IMR-90 (cell line): ENCODE measurements at regions of chr20 and their contacts with region 1.

Region 1: GRCh38 chr20:43187476-43188233 is 2.1 kb downstream of the PTPRT start:
- DNase-seq: peak; percentile 44
- ATAC-seq: peak; percentile 85
- H3K4me3 ChIP-seq: no peak overlapping the region
- H3K27ac ChIP-seq: no peak overlapping the region
- H3K4me1 ChIP-seq: no peaks in the 10 kb centered on the region
- H3K27me3 ChIP-seq: peaks cover 18% of the 10 kb centered on the region
- CTCF ChIP-seq: peak; percentile 92
- POLR2A ChIP-seq: no peak
- RAD21 ChIP-seq: peak; percentile 74

Region 2: GRCh38 chr20:41738604-41739206 is 1449.0 kb before region 1 on chr20:
- CTCF ChIA-PET with region 1: no interaction called
- POLR2A ChIA-PET with region 1: no interaction called
- dilution Hi-C with region 1: no loop called
- in situ Hi-C with region 1: loop called (anchors 5 kb)
- intact Hi-C with region 1: loop called (anchors 1 kb)
- DNase-seq: peak; percentile 31
- ATAC-seq: peak; percentile 97
- H3K4me3 ChIP-seq: no peak overlapping the region
- H3K27ac ChIP-seq: no peak overlapping the region
- H3K4me1 ChIP-seq: no peaks in the 10 kb centered on the region
- H3K27me3 ChIP-seq: no peaks in the 10 kb centered on the region
- CTCF ChIP-seq: peak; percentile 78
- POLR2A ChIP-seq: no peak
- RAD21 ChIP-seq: peak; percentile 80

Region 3: DNA sequence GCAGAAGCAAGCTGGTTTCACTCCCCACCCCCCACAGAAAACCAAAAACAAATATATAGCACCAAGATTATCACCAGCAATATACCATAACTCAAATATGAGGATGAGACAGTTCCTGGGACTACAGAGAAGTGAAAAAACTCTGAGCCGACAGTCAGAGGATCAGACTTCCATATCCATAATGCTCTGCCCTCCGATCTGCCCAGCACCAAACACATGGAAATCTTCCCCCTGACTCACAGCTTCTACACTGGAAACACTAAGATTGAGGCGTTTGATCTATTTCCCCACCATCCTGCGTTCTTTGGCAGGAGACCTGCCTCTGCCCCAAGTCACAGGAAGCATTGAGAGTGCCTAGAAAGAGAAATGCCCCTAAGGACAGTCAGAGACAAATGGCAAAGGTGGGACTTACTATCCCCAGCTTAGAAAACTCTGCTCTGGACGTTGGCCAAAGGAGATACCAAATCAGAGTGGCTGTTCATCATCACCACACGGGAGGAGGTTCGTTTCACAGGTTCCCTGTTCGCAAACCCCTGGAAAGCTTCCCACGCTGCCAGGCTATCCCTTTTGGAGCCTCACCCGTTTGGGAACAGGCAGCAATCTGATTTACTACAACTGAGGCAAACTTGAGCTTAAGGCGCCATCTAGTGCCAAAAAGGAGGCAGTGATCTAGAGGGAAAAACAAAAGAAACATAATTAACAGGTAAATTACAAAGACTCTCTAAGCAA is 221.4 kb after region 1 on chr20:
- CTCF ChIA-PET with region 1: no interaction called
- POLR2A ChIA-PET with region 1: no interaction called
- dilution Hi-C with region 1: no loop called
- in situ Hi-C with region 1: no loop called
- intact Hi-C with region 1: loop called (anchors 5 kb)
- DNase-seq: peak; percentile 52
- ATAC-seq: peak; percentile 71; the same call in 1 of the 2 replicates
- H3K4me3 ChIP-seq: no peak overlapping the region
- H3K27ac ChIP-seq: no peak overlapping the region
- H3K4me1 ChIP-seq: no peaks in the 10 kb centered on the region
- H3K27me3 ChIP-seq: no peaks in the 10 kb centered on the region
- CTCF ChIP-seq: peak; percentile 86
- POLR2A ChIP-seq: no peak
- RAD21 ChIP-seq: peak; percentile 90